Colonic mucosa (tissue), 4 donors: ENCODE measurements at regions of chr16 and their contacts with region 1.

Region 1: DNA sequence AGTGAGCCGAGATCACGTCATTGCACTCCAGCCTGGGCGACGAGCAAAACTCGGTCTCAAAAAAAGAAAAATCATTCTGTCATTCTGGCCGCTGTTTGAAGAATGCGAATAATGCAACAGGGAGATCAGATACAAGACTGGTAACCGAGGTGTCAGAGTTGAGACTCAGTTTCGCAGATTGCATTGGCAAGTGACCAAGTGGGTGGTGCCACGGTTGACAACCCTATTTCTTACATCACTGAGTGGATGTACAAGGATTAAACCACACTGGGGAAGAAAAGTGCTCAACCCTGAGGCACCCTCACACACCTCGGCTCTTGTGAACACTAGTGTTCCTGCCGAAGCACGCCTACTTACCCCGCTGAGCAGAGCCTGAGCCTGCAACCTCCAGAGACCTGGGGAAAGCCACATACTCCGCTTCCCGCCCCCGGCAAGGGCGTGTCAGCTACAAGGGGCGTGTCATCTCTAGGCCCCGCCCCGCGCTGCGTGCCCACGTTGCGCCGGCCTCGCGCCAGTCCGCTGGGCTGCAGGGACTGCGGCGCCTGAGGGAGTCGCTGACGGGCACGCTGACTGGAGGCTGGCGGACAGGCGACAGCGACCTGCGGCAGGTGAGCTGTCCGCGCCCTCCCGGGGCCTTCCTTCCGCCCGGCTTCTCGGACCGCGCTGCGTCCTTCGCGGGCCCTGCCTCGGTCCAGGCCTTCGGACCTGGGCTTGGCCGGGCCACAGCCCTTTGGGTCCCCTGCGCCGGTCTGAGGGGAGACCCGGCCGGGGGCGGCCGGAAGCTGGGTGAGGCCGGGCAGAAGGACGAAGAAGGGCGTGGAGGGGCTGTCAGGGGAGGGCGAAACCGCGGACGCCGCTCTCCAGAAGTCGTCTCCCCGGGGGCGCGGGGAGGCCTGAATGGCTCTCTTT is at the start of gene HMOX2:
- DNase-seq: peak; percentile 96
- H3K4me3 ChIP-seq: peak within 1 kb of the TSS; percentile 76
- H3K27ac ChIP-seq: peak within 1 kb of the TSS; percentile 81
- H3K4me1 ChIP-seq: peaks cover 5% of the 10 kb centered on the region
- H3K27me3 ChIP-seq: no peaks in the 10 kb centered on the region
- CTCF ChIP-seq: no peak
- total RNA-seq, gene HMOX2: 46.8 to 55.7 TPM

Region 2: DNA sequence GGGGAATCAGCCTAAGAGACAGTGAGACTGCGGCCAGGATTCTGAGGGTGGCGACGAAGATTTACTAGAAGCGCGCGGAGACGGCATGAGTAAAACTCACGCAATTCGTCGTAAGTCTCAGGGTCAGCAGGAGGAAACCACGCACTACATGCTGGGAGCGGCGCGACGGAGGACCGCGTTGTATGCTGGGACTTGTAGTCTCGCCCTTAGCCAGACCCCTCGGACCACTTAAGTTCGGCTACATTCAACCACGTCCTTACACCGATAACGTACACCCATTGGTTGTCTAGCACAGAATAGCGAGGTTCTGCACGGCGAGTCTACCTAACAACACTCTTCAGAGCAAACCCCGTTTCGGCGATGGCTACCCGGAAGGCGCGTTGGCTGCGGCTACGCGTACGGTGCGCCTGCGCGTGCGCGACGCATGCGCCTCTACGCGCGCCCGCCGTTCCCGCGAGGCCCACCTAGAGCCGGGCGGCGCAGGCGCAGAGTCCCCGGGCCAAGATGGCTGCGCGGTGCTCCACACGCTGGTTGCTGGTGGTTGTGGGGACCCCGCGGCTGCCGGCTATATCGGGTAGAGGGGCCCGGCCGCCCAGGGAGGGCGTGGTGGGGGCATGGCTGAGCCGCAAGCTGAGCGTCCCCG is 50.6 kb before region 1 on chr16 and contains the start of gene DNAJA3:
- intact Hi-C with region 1: loop called (anchors 10 kb)
- DNase-seq: peak; percentile 92
- H3K4me3 ChIP-seq: peak within 1 kb of the TSS; percentile 88
- H3K27ac ChIP-seq: peak within 1 kb of the TSS; percentile 86
- H3K4me1 ChIP-seq: peaks cover 7% of the 10 kb centered on the region
- H3K27me3 ChIP-seq: no peaks in the 10 kb centered on the region
- CTCF ChIP-seq: no peak
- total RNA-seq, gene DNAJA3: 48.3 to 76.1 TPM

Region 3: GRCh38 chr16:4640572-4641305 is 164.6 kb after region 1 on chr16:
- intact Hi-C with region 1: no loop called
- DNase-seq: no peak
- H3K4me3 ChIP-seq: no peak overlapping the region
- H3K27ac ChIP-seq: no peak overlapping the region
- H3K4me1 ChIP-seq: no peaks in the 10 kb centered on the region
- H3K27me3 ChIP-seq: no peaks in the 10 kb centered on the region
- CTCF ChIP-seq: no peak